HEK293 (cell line): ENCODE measurements at regions of chr9 and their contacts with region 1.

Region 1: GRCh38 chr9:127224178-127224882 is 40.2 kb upstream of the GARNL3 start:
- H3K4me3 ChIP-seq: peak overlapping the region; percentile 61
- H3K27ac ChIP-seq: 0 out of 2 replicates have a peak overlapping the region, but pooled peaks have one; percentile 27
- H3K4me1 ChIP-seq: no peaks in the 10 kb centered on the region
- CTCF ChIP-seq: no peak

Region 2: GRCh38 chr9:126860077-126860756 is 364.1 kb before region 1 on chr9 and contains the start of gene ZBTB34:
- CTCF ChIA-PET with region 1: no interaction called
- POLR2A ChIA-PET with region 1: no interaction called
- H3K4me3 ChIP-seq: peak within 1 kb of the TSS; percentile 92
- H3K27ac ChIP-seq: peak within 1 kb of the TSS; percentile 81
- H3K4me1 ChIP-seq: peaks cover 3% of the 10 kb centered on the region; the same call in 1 of the 2 replicates
- CTCF ChIP-seq: peak; percentile 95

Region 3: GRCh38 chr9:126980231-126980630 is 244.1 kb before region 1 on chr9:
- CTCF ChIA-PET with region 1: no interaction called
- POLR2A ChIA-PET with region 1: no interaction called
- H3K4me3 ChIP-seq: no peak overlapping the region
- H3K27ac ChIP-seq: no peak overlapping the region
- H3K4me1 ChIP-seq: no peaks in the 10 kb centered on the region
- CTCF ChIP-seq: no peak

Region 4: GRCh38 chr9:127159325-127159801 is 65.0 kb before region 1 on chr9:
- CTCF ChIA-PET with region 1: no interaction called
- POLR2A ChIA-PET with region 1: no interaction called
- H3K4me3 ChIP-seq: no peak overlapping the region
- H3K27ac ChIP-seq: no peak overlapping the region
- H3K4me1 ChIP-seq: no peaks in the 10 kb centered on the region
- CTCF ChIP-seq: no peak

Region 5: DNA sequence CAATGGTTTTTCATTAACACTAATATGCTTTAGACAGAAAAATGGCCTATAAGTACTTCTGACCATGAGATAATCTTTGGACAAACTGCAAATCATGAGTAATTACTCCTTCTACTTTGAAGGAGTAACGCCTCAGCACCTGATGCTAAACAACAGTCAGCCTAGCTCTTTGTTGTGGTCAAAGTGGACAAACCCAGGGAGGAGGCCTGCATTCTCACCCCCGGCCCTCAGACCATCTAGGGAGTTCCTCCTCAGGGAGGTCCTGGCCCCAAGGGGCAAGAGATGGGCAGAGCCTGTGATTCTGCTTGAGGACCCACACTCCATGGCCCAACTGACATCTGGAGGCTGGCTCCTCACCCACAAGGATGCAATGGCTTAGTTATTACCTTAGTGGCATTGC is 53.7 kb before region 1 on chr9:
- CTCF ChIA-PET with region 1: no interaction called
- POLR2A ChIA-PET with region 1: no interaction called
- H3K4me3 ChIP-seq: no peak overlapping the region
- H3K27ac ChIP-seq: no peak overlapping the region
- H3K4me1 ChIP-seq: no peaks in the 10 kb centered on the region
- CTCF ChIP-seq: no peak

Region 6: GRCh38 chr9:127244609-127245601 is 20.6 kb after region 1 on chr9:
- CTCF ChIA-PET with region 1: interaction called, 3 read pairs
- POLR2A ChIA-PET with region 1: interaction called, 14 read pairs
- H3K4me3 ChIP-seq: peak overlapping the region; percentile 71
- H3K27ac ChIP-seq: no peak overlapping the region
- H3K4me1 ChIP-seq: no peaks in the 10 kb centered on the region
- CTCF ChIP-seq: no peak

Region 7: GRCh38 chr9:127388037-127388855 is 163.9 kb after region 1 on chr9:
- CTCF ChIA-PET with region 1: interaction called, 3 read pairs
- POLR2A ChIA-PET with region 1: interaction called, 14 read pairs
- H3K4me3 ChIP-seq: no peak overlapping the region
- H3K27ac ChIP-seq: peak overlapping the region; percentile 53
- H3K4me1 ChIP-seq: peaks cover 12% of the 10 kb centered on the region
- CTCF ChIP-seq: no peak

Region 8: GRCh38 chr9:127423934-127424675 is 199.8 kb after region 1 on chr9 and contains the start of gene ZNF79:
- CTCF ChIA-PET with region 1: no interaction called
- POLR2A ChIA-PET with region 1: interaction called, 12 read pairs
- H3K4me3 ChIP-seq: peak within 1 kb of the TSS; percentile 64
- H3K27ac ChIP-seq: peak within 1 kb of the TSS; percentile 80
- H3K4me1 ChIP-seq: 0 out of 2 replicates have a peak, but pooled peaks cover 5% of the 10 kb centered on the region
- CTCF ChIP-seq: no peak